HEK293 (cell line): ENCODE measurements at regions of chrX and their contacts with region 1.

Region 1: GRCh38 chrX:40877887-40878286 is 142.5 kb upstream of the MED14 start:
- H3K4me3 ChIP-seq: no peak overlapping the region
- H3K27ac ChIP-seq: no peak overlapping the region
- H3K4me1 ChIP-seq: no peaks in the 10 kb centered on the region
- CTCF ChIP-seq: no peak

Region 2: GRCh38 chrX:39144956-39145355 is 1732.9 kb before region 1 on chrX:
- CTCF ChIA-PET with region 1: no interaction called
- POLR2A ChIA-PET with region 1: no interaction called
- H3K4me3 ChIP-seq: no peak overlapping the region
- H3K27ac ChIP-seq: no peak overlapping the region
- H3K4me1 ChIP-seq: no peaks in the 10 kb centered on the region
- CTCF ChIP-seq: no peak

Region 3: GRCh38 chrX:40891798-40892197 is 13.9 kb after region 1 on chrX:
- CTCF ChIA-PET with region 1: interaction called, 11 read pairs
- POLR2A ChIA-PET with region 1: no interaction called
- H3K4me3 ChIP-seq: no peak overlapping the region
- H3K27ac ChIP-seq: no peak overlapping the region
- H3K4me1 ChIP-seq: no peaks in the 10 kb centered on the region; the same call in 1 of the 2 replicates
- CTCF ChIP-seq: no peak

Region 4: GRCh38 chrX:40922307-40922706 is 44.4 kb after region 1 on chrX:
- CTCF ChIA-PET with region 1: interaction called, 13 read pairs
- POLR2A ChIA-PET with region 1: no interaction called
- H3K4me3 ChIP-seq: no peak overlapping the region
- H3K27ac ChIP-seq: no peak overlapping the region
- H3K4me1 ChIP-seq: no peaks in the 10 kb centered on the region
- CTCF ChIP-seq: no peak